Activated naive CD8-positive, alpha-beta T cell treated with anti-CD3 and anti-CD28 coated beads, Interleukin-2, amount 10 ng/mL, durations not matched to agents 7 days and 5 days (primary cell): ENCODE measurements at regions of chr5 and their contacts with region 1.

Region 1: GRCh38 chr5:149357370-149358293 is at the start of gene PCYOX1L:
- DNase-seq: peak; percentile 92
- ATAC-seq: peak; percentile 99
- H3K4me3 Mint-ChIP-seq: peak within 1 kb of the TSS; percentile 97
- H3K27ac Mint-ChIP-seq: peak within 1 kb of the TSS; percentile 90
- H3K4me1 Mint-ChIP-seq: peaks cover 48% of the 10 kb centered on the region
- H3K27me3 Mint-ChIP-seq: no peaks in the 10 kb centered on the region
- total RNA-seq, gene PCYOX1L: 32.4 to 35.7 TPM

Region 2: GRCh38 chr5:148904440-148904839 is 453.2 kb before region 1 on chr5:
- POLR2A ChIA-PET with region 1: no interaction called
- DNase-seq: no peak
- ATAC-seq: no peak
- H3K4me3 Mint-ChIP-seq: no peak overlapping the region
- H3K27ac Mint-ChIP-seq: no peak overlapping the region
- H3K4me1 Mint-ChIP-seq: no peaks in the 10 kb centered on the region
- H3K27me3 Mint-ChIP-seq: peaks cover 2% of the 10 kb centered on the region

Region 3: GRCh38 chr5:149345147-149345875 is 12.3 kb before region 1 on chr5 and contains the start of gene GRPEL2:
- POLR2A ChIA-PET with region 1: interaction called, 131 read pairs
- DNase-seq: peak; percentile 88
- ATAC-seq: peak; percentile 81
- H3K4me3 Mint-ChIP-seq: peak within 1 kb of the TSS; percentile 93
- H3K27ac Mint-ChIP-seq: peak within 1 kb of the TSS; percentile 92
- H3K4me1 Mint-ChIP-seq: peaks cover 43% of the 10 kb centered on the region
- H3K27me3 Mint-ChIP-seq: no peaks in the 10 kb centered on the region
- total RNA-seq, gene GRPEL2: 26.1 to 29.7 TPM